ENCODE measurements at regions of chr17 and their contacts with region 1.

Region 1: DNA sequence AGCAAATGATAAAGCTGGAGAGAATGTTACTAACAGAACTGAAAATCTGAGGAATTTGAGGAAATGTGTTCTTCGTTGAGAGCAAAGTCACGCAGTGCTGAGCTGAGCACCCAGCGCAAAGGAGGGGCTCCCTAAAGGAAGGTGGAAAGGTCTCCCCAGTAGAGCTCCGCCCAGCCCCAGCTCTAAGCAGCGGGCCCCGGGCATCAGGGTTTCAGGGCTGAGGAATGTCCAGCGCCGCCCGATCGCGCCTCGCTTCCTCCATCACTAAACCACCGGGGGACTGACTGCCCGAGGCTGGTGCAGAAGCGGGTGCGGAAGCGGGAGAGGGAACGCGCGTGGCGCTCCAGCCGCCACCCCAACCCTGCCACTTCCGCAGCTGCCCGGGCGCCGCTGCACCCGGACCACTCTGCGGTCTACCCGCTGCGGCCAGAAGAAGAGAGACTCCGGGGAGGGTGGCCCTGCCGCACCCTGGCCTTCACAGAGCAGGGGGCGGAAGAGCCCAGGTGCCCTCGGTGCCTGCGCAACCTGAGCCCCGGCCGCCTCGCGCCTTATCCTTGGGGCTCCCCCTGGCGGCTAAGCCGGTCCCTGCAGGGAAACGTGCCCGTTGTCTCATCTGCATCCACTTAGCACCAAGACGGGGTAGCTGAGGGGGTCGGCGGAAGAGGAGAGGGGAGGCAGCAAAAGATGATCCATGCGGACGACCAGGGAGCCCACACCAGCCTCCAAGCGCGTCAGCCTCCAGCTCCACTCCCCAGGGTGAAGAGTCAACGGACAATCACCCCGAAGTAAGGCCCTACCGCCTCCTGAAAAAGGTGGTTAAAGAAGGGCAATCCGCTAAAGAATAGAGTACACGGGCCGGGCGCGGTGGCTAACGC is 12.4 kb upstream of the GUCY2D start:
- DNase-seq: peak; percentile 23
- H3K4me3 ChIP-seq: peak overlapping the region; percentile 47 to 84 (median 68)
- H3K27ac ChIP-seq: peak overlapping the region; percentile 63 to 85 (median 81)
- H3K4me1 ChIP-seq: peaks cover 0 to 20% (median 5%) of the 10 kb centered on the region in 3 donors
- H3K27me3 ChIP-seq: peaks cover 0 to 20% (median 0%) of the 10 kb centered on the region in 4 donors
- CTCF ChIP-seq: peak; percentile 93 to 99 (median 96)
- POLR2A ChIP-seq: no peak

Region 2: DNA sequence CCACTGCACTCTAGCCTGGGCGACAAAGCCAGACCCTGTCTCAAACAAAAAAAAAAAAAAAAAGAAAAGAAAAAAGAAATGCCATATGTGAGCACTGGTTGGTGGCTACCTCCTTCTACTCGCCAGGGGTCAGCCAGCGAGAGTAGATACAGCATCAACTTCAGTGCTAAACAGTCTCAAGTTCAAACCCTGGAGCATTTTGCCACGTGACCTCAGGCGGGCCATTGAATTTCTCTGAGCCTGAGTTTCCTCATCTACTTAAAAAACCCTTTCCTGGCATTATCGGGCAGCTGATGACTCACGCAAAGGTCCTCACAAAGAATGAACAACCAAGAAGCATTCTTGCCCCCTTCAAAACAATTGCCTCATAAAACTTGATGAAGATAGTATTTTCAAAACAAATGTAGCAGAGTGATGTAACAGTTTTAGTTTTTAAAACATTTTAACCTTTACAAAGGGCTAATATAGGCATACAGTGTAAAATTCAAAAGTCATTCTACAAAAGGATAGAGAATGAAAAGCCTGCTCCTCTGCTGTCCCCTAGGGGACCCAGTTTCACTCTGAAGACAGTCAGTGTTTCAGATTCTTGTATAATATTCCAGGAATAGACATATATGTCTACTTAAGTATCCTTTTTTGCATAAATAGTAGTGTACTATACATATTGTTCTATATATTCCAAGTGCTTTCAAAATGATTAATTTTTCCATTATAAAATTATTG is 244.1 kb before region 1 on chr17:
- intact Hi-C with region 1: loop called (anchors 10 kb)
- DNase-seq: no peak
- H3K4me3 ChIP-seq: no peak overlapping the region
- H3K27ac ChIP-seq: no peak overlapping the region
- H3K4me1 ChIP-seq: peaks cover 0 to 11% (median 0%) of the 10 kb centered on the region in 3 donors
- H3K27me3 ChIP-seq: peaks cover 0 to 18% (median 0%) of the 10 kb centered on the region in 4 donors
- CTCF ChIP-seq: no peak
- POLR2A ChIP-seq: no peak

Region 3: DNA sequence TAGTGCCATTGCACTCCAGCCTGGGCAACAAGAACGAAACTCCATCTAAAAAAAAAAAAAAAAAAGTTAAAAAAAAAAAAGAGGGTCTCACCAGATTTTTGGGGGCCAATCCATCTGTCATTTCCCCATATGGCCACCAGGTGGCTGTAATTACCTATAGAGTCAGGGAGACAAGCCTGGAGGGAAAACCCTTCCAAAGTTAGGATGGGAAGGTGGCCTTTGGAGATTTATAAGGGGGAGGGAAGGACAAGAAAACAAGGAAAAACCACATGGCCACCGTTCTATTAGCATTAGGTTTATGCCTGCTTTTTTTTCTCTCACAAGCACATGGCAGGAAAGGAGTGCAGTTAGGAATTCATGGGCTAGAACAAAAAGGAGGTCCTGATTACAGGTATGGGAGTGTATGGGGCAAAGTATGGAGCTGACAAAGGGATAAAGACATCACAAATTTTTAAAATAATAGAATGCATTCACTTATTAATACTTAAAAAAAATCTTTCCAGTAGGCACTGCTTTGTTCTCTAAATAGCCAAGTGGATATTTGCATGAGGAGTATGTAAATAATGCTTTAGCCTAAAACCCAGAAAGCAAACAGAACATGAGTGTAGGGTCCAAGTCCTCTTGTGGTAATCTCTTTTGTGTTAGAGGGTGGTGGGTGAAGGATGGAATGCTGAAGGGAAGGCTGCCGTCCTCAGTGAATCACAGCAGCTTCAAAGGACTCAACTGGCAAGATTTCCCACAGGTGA is 127.2 kb before region 1 on chr17:
- intact Hi-C with region 1: loop called (anchors 5 kb)
- DNase-seq: no peak
- H3K4me3 ChIP-seq: no peak overlapping the region
- H3K27ac ChIP-seq: no peak overlapping the region
- H3K4me1 ChIP-seq: peaks cover 9 to 45% (median 18%) of the 10 kb centered on the region in 3 donors
- H3K27me3 ChIP-seq: no peaks in the 10 kb centered on the region
- CTCF ChIP-seq: peak; percentile 71 to 89 (median 86)
- POLR2A ChIP-seq: no peak

Region 4: GRCh38 chr17:7912927-7913524 is 77.0 kb before region 1 on chr17:
- intact Hi-C with region 1: loop called (anchors 5 kb)
- DNase-seq: no peak
- H3K4me3 ChIP-seq: no peak overlapping the region
- H3K27ac ChIP-seq: peak overlapping the region in 2 of 4 donors; percentile 34 to 36
- H3K4me1 ChIP-seq: peaks cover 20 to 39% (median 23%) of the 10 kb centered on the region in 3 donors
- H3K27me3 ChIP-seq: no peaks in the 10 kb centered on the region
- CTCF ChIP-seq: peak in 5 of 6 experiments; percentile 53 to 80 (median 63)
- POLR2A ChIP-seq: no peak

Region 5: GRCh38 chr17:8041249-8041928 is 51.4 kb after region 1 on chr17:
- intact Hi-C with region 1: loop called (anchors 10 kb)
- DNase-seq: no peak
- H3K4me3 ChIP-seq: peak overlapping the region in 2 of 4 donors; percentile 37 to 56
- H3K27ac ChIP-seq: peak overlapping the region; percentile 81 to 89 (median 84)
- H3K4me1 ChIP-seq: peaks cover 8 to 46% (median 24%) of the 10 kb centered on the region in 3 donors
- H3K27me3 ChIP-seq: peaks cover 0 to 53% (median 0%) of the 10 kb centered on the region in 4 donors
- CTCF ChIP-seq: peak; percentile 50 to 82 (median 63)
- POLR2A ChIP-seq: no peak

Region 6: GRCh38 chr17:8091033-8091687 is 101.1 kb after region 1 on chr17:
- intact Hi-C with region 1: no loop called
- DNase-seq: no peak
- H3K4me3 ChIP-seq: no peak overlapping the region
- H3K27ac ChIP-seq: peak overlapping the region in 2 of 4 donors; percentile 42 to 44
- H3K4me1 ChIP-seq: peaks cover 0 to 17% (median 6%) of the 10 kb centered on the region in 3 donors
- H3K27me3 ChIP-seq: peaks cover 0 to 62% (median 0%) of the 10 kb centered on the region in 4 donors
- CTCF ChIP-seq: no peak
- POLR2A ChIP-seq: no peak

Region 7: GRCh38 chr17:8397203-8398045 is 407.4 kb after region 1 on chr17 and contains the start of gene RNF222:
- intact Hi-C with region 1: no loop called
- DNase-seq: no peak
- H3K4me3 ChIP-seq: peak within 1 kb of the TSS; percentile 11 to 40 (median 18)
- H3K27ac ChIP-seq: peak within 1 kb of the TSS in 3 of 4 donors; percentile 23 to 76 (median 56)
- H3K4me1 ChIP-seq: peaks cover 0 to 27% (median 0%) of the 10 kb centered on the region in 3 donors
- H3K27me3 ChIP-seq: peaks cover 0 to 82% (median 0%) of the 10 kb centered on the region in 4 donors
- CTCF ChIP-seq: no peak
- POLR2A ChIP-seq: peak in 1 of 4 donors; percentile 19
- total RNA-seq, gene RNF222: 8.1 to 21.8 (median 14.9) TPM

Measured in esophagus squamous epithelium (tissue), 5 donors.